Heart left ventricle (tissue), 16 donors: ENCODE measurements at regions of chr15 and their contacts with region 1.

Region 1: DNA sequence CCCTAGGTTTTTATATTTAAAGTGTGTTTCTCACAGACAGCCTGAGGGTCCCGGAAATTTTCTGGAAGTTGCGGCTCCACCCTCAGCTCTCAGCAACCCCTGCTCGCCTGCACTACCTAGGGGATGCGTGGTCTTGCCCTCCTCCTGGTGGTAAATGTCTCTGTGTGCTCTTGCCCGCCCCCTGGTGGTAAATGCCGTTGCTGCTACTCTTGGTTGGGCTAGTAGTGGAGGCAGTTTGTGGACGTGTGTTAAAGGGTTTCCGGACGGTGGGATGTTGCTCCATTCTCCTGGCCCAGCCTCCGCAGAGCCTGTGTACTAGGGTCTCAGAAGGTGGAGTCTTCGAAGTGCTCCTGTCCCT is 27.4 kb downstream of the STOML1 start:
- DNase-seq: peak; percentile 75 to 90 (median 79)
- ATAC-seq: peak; percentile 81 to 94 (median 93)
- H3K4me3 ChIP-seq: peak overlapping the region in 1 of 12 donors; percentile 38
- H3K27ac ChIP-seq: peak overlapping the region in 1 of 12 donors; percentile 42
- H3K4me1 ChIP-seq: peaks cover 0 to 18% (median 3%) of the 10 kb centered on the region in 12 donors
- H3K27me3 ChIP-seq: no peaks in the 10 kb centered on the region
- CTCF ChIP-seq: peak; percentile 88 to 97 (median 94)
- POLR2A ChIP-seq: no peak

Region 2: DNA sequence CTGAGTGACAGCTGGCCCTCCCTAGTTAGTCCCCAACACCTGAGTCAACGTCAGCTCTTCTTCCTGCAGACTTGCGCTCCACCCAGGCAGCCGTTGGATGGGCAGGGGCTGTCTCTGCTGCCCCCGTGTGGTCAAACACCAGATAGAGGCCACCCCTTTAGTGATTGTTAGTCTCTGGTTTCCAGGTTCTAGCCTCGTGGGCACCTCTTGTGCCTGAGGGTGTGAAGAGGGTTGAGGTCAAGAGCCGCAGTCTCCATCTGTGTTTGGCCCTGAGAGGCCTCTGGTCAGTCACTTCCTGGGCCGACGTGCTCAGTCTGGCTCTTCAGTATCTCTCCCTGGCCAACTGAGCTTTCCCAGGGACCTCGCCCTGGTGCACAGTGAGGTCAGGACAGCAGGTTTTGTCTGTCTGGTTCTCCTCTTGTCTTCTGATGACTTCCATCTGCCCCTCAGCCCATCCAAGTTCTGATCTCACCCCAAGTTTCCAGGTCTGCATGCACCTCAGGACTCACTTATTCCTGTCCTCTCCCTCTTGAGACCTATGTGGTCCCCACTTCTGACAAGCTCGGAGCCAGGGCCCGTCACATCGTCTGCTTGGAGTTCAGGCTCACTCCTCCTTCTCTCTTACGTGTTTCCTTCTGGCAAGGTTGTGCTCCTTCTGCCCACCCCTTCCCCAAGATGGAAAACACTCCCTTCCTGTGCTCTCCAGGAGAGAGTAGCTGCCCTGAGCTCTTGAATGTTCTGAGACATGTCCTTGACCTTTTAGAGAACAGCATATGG is 259.7 kb before region 1 on chr15:
- intact Hi-C with region 1: no loop called
- DNase-seq: peak; percentile 44 to 81 (median 67)
- ATAC-seq: peak; percentile 38 to 73 (median 58)
- H3K4me3 ChIP-seq: no peak overlapping the region
- H3K27ac ChIP-seq: no peak overlapping the region
- H3K4me1 ChIP-seq: peaks cover 0 to 7% (median 0%) of the 10 kb centered on the region in 12 donors
- H3K27me3 ChIP-seq: no peaks in the 10 kb centered on the region
- CTCF ChIP-seq: peak; percentile 65 to 87 (median 82)
- POLR2A ChIP-seq: no peak

Region 3: DNA sequence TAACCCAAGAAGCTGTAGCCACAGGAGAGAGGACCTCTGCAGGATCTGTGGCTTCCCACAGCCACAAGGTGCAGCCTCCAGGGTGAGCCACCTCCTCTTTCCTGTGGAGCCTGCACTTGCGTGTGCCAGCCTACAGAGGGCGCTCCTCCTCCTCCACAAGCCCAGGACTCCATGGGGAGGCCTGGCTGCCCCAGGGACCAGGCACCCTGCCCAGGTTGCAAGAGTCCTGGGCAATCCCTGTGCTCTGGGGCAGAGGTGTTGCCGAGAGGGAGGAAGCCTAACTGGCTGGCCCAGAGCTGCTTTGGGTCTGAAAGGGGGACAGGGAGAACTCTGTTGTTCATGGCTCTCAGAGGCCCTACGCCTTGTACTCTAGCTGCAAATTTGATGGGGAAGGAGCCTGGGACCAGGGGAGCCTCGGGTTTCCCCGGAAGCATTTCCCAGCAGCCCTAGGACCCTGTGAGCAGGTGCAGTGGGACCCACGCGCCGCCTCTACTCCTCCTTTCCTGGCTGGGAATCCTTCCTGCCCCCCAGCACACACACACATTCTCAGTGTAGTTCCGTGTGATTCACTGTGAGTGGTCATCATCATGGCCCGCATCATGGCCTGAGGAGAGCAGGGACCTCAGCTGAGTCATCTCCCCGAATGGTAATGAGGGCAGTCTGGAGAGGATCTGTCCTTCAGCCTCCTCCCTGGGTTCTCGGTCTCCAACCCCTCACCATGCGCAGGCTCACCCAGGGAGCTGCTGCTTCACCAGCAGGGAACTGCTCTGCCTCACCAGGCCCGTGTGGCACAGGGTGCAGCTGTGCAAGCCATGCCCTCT is 67.1 kb before region 1 on chr15:
- intact Hi-C with region 1: loop called in 4 of 10 experiments (anchors 2 to 10 kb)
- DNase-seq: peak; percentile 39 to 85 (median 74)
- ATAC-seq: peak; percentile 88 to 94 (median 90)
- H3K4me3 ChIP-seq: no peak overlapping the region
- H3K27ac ChIP-seq: no peak overlapping the region
- H3K4me1 ChIP-seq: peaks cover 0 to 2% (median 0%) of the 10 kb centered on the region in 12 donors
- H3K27me3 ChIP-seq: no peaks in the 10 kb centered on the region
- CTCF ChIP-seq: peak; percentile 76 to 86 (median 80)
- POLR2A ChIP-seq: no peak

Region 4: DNA sequence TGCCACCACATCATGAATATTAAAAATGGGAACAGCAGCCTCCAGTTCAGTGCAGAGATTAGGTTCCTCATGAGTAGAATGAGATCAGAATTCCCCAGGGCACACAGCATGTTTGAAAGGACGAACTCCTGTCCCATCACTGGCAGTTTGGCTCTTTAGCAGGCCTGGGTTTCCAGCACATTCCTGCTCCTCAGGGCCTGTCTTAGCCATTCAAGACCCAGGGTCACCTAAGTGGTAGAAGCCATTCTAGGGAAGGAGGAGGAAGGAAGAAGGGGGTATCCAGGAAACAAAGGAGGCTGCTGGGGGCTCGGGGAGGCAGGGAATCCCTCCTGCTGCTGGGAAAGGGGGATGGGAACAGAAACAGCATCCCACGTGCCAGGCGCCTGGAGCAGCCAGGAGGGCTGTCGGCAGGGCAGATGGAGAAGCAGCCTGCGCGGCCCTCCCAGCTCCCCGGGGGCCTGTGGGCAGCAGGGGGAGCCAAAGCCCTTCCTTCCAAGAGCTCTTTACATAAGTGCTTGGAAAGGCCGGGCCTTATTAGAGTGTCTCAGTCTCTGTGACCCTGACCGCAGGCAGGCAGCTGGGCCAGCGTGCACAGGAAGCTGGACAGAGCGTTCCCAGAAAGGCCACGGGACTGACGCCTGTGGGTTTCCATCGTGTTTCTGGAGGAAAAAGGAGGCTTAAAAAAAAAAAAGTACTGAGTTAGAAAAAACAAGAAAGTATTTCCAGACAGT is 13.7 kb before region 1 on chr15:
- intact Hi-C with region 1: loop called in 4 of 10 experiments (anchors 1 to 2 kb)
- DNase-seq: peak; percentile 93 to 97 (median 95)
- ATAC-seq: peak; percentile 91 to 97 (median 93)
- H3K4me3 ChIP-seq: no peak overlapping the region
- H3K27ac ChIP-seq: peak overlapping the region; percentile 84 to 98 (median 93)
- H3K4me1 ChIP-seq: peaks cover 9 to 42% (median 31%) of the 10 kb centered on the region in 12 donors
- H3K27me3 ChIP-seq: no peaks in the 10 kb centered on the region
- CTCF ChIP-seq: peak; percentile 76 to 94 (median 88)
- POLR2A ChIP-seq: no peak

Region 5: DNA sequence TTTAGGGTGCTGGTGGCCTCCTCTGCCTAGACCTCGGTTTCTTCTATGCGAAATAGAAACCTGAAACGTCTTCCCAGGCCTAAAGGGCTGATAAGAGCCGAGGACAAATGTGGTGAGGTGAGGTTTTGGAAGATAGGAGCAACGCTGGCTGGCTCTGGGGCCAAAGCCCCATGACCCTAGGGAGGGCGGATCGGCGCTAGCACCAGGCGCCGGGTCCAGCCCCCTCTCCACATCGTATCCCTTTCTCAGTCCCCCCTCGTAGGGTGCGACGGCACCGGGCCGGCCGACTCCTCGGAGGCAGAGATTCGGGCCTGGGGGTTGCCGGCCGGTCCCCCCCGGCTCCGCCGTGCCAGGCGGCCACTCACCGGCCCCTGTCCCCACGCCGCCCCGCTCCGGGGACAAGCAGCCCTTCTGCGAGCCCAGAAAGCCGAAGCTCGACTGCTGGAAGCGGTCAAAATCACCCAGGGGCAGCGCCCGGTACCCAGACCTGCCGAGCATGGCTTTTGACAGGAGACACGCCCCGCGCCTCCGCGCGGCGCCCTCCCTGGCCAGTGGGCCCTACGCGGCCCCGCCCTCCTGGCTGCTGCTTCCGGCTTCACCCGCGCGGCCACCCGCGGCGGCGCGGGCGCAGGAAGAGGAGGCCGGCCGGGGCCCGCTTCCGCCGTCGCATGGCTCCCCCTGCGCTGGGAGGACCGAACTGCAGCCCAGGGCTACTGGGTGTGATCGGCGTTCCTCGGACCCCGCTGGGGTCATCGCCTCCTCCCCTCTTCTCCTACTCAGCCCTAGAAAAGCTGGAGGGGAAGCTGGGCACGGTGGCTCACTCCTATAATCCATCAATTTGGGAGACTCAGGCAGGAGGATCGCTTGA is 27.2 kb after region 1 on chr15 and contains the start of gene STOML1:
- intact Hi-C with region 1: no loop called
- DNase-seq: peak; percentile 92 to 97 (median 96)
- ATAC-seq: peak; percentile 60 to 89 (median 82)
- H3K4me3 ChIP-seq: peak within 1 kb of the TSS; percentile 60 to 96 (median 87)
- H3K27ac ChIP-seq: peak within 1 kb of the TSS; percentile 90 to 100 (median 95)
- H3K4me1 ChIP-seq: peaks cover 24 to 86% (median 77%) of the 10 kb centered on the region in 12 donors
- H3K27me3 ChIP-seq: no peaks in the 10 kb centered on the region
- CTCF ChIP-seq: peak; percentile 82 to 99 (median 96)
- POLR2A ChIP-seq: peak in 1 of 2 donors; percentile 64
- total RNA-seq, gene STOML1: 25.0 to 41.1 (median 27.4) TPM

Region 6: DNA sequence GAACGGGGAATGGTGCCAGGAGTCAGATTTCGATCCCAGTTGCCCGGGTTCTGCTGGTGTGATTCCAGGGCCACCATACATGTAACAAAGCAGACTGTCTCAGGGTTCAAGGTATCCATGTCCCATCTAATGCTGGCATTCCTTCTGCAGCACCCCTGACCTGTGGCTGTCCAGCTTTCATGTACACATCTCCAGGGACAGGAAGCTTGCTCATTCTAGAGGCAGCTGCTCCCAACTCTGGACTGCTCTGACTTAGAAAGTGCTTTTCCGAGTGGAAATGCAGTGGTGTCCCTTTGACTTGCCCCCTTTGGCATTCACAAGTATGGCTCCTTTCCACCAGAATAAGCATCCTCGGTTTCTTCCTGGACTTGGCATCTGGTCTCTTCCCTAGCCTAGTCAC is 60.7 kb after region 1 on chr15:
- intact Hi-C with region 1: no loop called
- DNase-seq: no peak
- ATAC-seq: peak in 3 of 4 donors; percentile 30 to 53 (median 44)
- H3K4me3 ChIP-seq: no peak overlapping the region
- H3K27ac ChIP-seq: peak overlapping the region in 1 of 12 donors; percentile 10
- H3K4me1 ChIP-seq: peaks cover 0 to 38% (median 13%) of the 10 kb centered on the region in 12 donors
- H3K27me3 ChIP-seq: no peaks in the 10 kb centered on the region
- CTCF ChIP-seq: no peak
- POLR2A ChIP-seq: no peak

Region 7: DNA sequence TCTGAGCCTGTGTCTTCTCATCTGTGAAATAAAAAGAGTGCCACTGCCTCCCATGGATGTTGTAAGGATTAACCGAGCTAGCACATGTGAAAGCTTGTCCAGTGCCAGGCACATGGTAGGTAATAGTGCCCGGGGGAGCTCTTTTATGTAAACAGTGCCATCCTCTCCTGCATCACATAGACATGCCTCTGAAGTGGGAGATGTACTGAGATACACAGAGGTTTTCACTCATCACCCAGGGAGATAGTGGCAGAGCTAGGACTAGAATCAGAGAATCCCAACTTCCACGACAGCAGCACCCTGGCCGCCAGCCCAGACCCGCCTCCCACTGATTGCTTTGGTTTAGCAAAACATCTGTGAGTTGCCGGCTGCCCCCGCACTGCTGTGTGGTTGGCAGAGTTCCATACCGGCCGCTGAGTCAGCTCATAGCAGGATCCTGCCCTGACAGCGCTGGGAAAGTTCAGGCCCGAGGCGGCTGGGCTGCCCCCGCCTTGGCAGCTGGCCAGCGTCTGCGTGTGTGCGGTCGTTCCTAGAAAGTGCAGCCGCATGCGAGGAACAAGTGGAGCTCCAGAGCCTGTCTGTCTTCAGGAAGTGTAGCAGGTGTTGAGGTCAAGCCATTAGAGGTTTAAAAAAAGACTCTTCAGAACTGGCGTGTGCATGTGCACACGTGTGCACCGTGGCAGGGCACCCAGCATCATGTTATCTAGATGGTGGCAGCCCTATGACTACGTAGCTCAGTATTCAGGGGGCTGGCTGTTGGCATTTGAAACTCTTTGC is 581.4 kb after region 1 on chr15:
- intact Hi-C with region 1: no loop called
- DNase-seq: peak; percentile 98 to 99 (median 99)
- ATAC-seq: peak; percentile 94 to 97 (median 95)
- H3K4me3 ChIP-seq: peak overlapping the region in 4 of 12 donors; percentile 8 to 29 (median 20)
- H3K27ac ChIP-seq: peak overlapping the region in 4 of 12 donors; percentile 4 to 35 (median 10)
- H3K4me1 ChIP-seq: peaks cover 0 to 59% (median 26%) of the 10 kb centered on the region in 12 donors
- H3K27me3 ChIP-seq: no peaks in the 10 kb centered on the region
- CTCF ChIP-seq: no peak
- POLR2A ChIP-seq: no peak